Activated B cell treated with CpG ODN at 0.5 μM for 24 hours (primary cell): ENCODE measurements at regions of chr12 and their contacts with region 1.

Region 1: GRCh38 chr12:51590347-51591019 is 550 bp upstream of the SCN8A start:
- DNase-seq: peak; percentile 75
- ATAC-seq: peak; percentile 88
- H3K4me3 Mint-ChIP-seq: peak overlapping the region; percentile 88
- H3K27ac Mint-ChIP-seq: peak overlapping the region; percentile 56
- H3K4me1 Mint-ChIP-seq: peaks cover 18% of the 10 kb centered on the region
- H3K27me3 Mint-ChIP-seq: peaks cover 32% of the 10 kb centered on the region
- CTCF ChIP-seq: no peak

Region 2: GRCh38 chr12:51695241-51696010 is 104.9 kb after region 1 on chr12:
- CTCF ChIA-PET with region 1: no interaction called
- POLR2A ChIA-PET with region 1: no interaction called
- intact Hi-C with region 1: no loop called
- DNase-seq: no peak
- ATAC-seq: no peak
- H3K4me3 Mint-ChIP-seq: no peak overlapping the region
- H3K27ac Mint-ChIP-seq: no peak overlapping the region
- H3K4me1 Mint-ChIP-seq: no peaks in the 10 kb centered on the region
- H3K27me3 Mint-ChIP-seq: peaks cover 7% of the 10 kb centered on the region
- CTCF ChIP-seq: no peak

Region 3: GRCh38 chr12:51823875-51824565 is 233.5 kb after region 1 on chr12:
- CTCF ChIA-PET with region 1: no interaction called
- POLR2A ChIA-PET with region 1: no interaction called
- intact Hi-C with region 1: loop called (anchors 10 kb)
- DNase-seq: no peak
- ATAC-seq: no peak
- H3K4me3 Mint-ChIP-seq: no peak overlapping the region
- H3K27ac Mint-ChIP-seq: no peak overlapping the region
- H3K4me1 Mint-ChIP-seq: peaks cover 16% of the 10 kb centered on the region
- H3K27me3 Mint-ChIP-seq: peaks cover 21% of the 10 kb centered on the region
- CTCF ChIP-seq: no peak